Naive thymus-derived CD4-positive, alpha-beta T cell (primary cell): ENCODE measurements at regions of chr14 and their contacts with region 1.

Region 1: GRCh38 chr14:97978341-97978740 is 1181.2 kb downstream of the VRK1 start:
- DNase-seq: peak; percentile 33 to 83 (median 72)
- ATAC-seq: peak; percentile 84
- H3K4me3 ChIP-seq: peak overlapping the region; percentile 91
- H3K4me3 Mint-ChIP-seq: peak overlapping the region; percentile 85 to 99 (median 93)
- H3K27ac ChIP-seq: peak overlapping the region; percentile 85
- H3K27ac Mint-ChIP-seq: peak overlapping the region; percentile 68 to 99 (median 92)
- H3K4me1 ChIP-seq: peaks cover 25 to 40% of the 10 kb centered on the region in 2 donors
- H3K4me1 Mint-ChIP-seq: peaks cover 32 to 64% (median 50%) of the 10 kb centered on the region in 7 donors
- H3K27me3 ChIP-seq: no peaks in the 10 kb centered on the region
- H3K27me3 Mint-ChIP-seq: no peaks in the 10 kb centered on the region

Region 2: GRCh38 chr14:97177015-97177414 is 801.3 kb before region 1 on chr14:
- CTCF ChIA-PET with region 1: no interaction called
- POLR2A ChIA-PET with region 1: no interaction called
- intact Hi-C with region 1: loop called in 1 of 2 experiments (anchors 2 kb)
- DNase-seq: peak in 7 of 9 donors; percentile 36 to 63 (median 49)
- ATAC-seq: peak; percentile 67
- H3K4me3 ChIP-seq: no peak overlapping the region
- H3K4me3 Mint-ChIP-seq: peak overlapping the region in 4 of 10 donors; percentile 28 to 51 (median 36)
- H3K27ac ChIP-seq: no peak overlapping the region
- H3K27ac Mint-ChIP-seq: peak overlapping the region in 5 of 9 donors; percentile 32 to 78 (median 63)
- H3K4me1 ChIP-seq: peaks cover 0 to 3% of the 10 kb centered on the region in 2 donors
- H3K4me1 Mint-ChIP-seq: peaks cover 0 to 41% (median 32%) of the 10 kb centered on the region in 7 donors
- H3K27me3 ChIP-seq: no peaks in the 10 kb centered on the region
- H3K27me3 Mint-ChIP-seq: peaks cover 0 to 2% (median 0%) of the 10 kb centered on the region in 5 donors

Region 3: GRCh38 chr14:97620066-97620465 is 358.3 kb before region 1 on chr14:
- CTCF ChIA-PET with region 1: interaction called, 4 read pairs
- POLR2A ChIA-PET with region 1: interaction called, 3 read pairs
- intact Hi-C with region 1: loop called (anchors 5 kb)
- DNase-seq: peak in 1 of 9 donors; percentile 15
- ATAC-seq: no peak
- H3K4me3 ChIP-seq: peak overlapping the region; percentile 4
- H3K4me3 Mint-ChIP-seq: peak overlapping the region; percentile 72 to 95 (median 85)
- H3K27ac ChIP-seq: peak overlapping the region; percentile 76
- H3K27ac Mint-ChIP-seq: peak overlapping the region; percentile 95 to 100 (median 98)
- H3K4me1 ChIP-seq: peaks cover 37 to 38% of the 10 kb centered on the region in 2 donors
- H3K4me1 Mint-ChIP-seq: peaks cover 33 to 74% (median 58%) of the 10 kb centered on the region in 7 donors
- H3K27me3 ChIP-seq: no peaks in the 10 kb centered on the region
- H3K27me3 Mint-ChIP-seq: no peaks in the 10 kb centered on the region

Region 4: DNA sequence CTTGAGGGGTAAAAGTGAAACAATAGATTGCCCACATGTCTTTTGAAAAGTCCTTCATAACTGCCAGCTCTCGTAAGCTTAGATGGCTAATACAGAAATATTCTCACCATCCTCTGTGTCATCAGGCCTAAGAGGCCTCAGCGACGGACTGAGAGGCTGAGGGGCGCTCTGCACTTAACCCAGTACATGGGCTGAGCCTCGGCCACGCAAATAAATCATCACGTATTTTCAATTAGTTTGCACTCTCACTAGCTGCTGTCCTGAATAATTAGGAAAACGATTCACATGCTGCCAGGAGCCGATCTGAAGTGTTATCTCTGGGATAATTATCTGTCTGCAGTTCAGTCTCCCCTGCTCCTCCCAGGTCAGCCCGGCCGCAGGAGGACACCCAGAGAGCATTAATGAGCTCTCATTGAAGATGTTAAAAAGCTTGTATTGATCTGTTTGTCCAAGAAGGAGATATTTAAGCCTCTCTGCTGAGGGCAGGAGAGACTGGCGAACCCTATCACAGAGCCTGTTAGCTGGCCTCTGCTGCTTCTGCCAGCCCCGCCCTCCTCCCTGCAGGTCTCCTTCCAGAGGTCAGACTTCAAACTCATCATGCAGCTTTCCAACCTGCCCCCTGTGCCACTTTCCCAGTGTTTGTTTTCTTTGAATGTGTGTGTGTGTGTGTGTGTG is 129.9 kb before region 1 on chr14:
- CTCF ChIA-PET with region 1: no interaction called
- POLR2A ChIA-PET with region 1: no interaction called
- intact Hi-C with region 1: no loop called
- DNase-seq: no peak
- ATAC-seq: no peak
- H3K4me3 ChIP-seq: no peak overlapping the region
- H3K4me3 Mint-ChIP-seq: no peak overlapping the region
- H3K27ac ChIP-seq: no peak overlapping the region
- H3K27ac Mint-ChIP-seq: peak overlapping the region in 1 of 9 donors; percentile 21
- H3K4me1 ChIP-seq: no peaks in the 10 kb centered on the region
- H3K4me1 Mint-ChIP-seq: peaks cover 0 to 3% (median 0%) of the 10 kb centered on the region in 7 donors
- H3K27me3 ChIP-seq: no peaks in the 10 kb centered on the region
- H3K27me3 Mint-ChIP-seq: no peaks in the 10 kb centered on the region

Region 5: DNA sequence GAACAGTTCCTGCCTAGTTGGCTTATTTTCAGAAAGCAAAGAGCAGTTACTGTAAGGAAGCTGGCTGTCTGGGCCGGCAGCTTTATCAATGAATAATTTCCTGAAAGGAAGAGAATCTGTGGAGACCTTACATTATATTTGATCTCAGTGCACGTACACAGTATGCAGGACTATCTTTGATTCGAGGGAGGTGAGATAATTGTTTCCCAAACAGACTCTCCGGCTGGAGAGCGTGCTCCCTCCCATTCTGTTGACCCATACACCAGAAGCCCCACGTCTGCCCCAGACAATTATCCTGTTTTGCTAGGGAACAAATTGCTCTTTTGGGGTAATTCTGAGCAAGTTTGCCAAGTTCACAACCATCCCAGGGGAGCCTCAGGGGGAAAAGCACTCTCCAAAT is 66.1 kb before region 1 on chr14:
- CTCF ChIA-PET with region 1: no interaction called
- POLR2A ChIA-PET with region 1: no interaction called
- intact Hi-C with region 1: no loop called
- DNase-seq: no peak
- ATAC-seq: no peak
- H3K4me3 ChIP-seq: no peak overlapping the region
- H3K4me3 Mint-ChIP-seq: no peak overlapping the region
- H3K27ac ChIP-seq: no peak overlapping the region
- H3K27ac Mint-ChIP-seq: no peak overlapping the region
- H3K4me1 ChIP-seq: peaks cover 0 to 11% of the 10 kb centered on the region in 2 donors
- H3K4me1 Mint-ChIP-seq: peaks cover 5 to 18% (median 12%) of the 10 kb centered on the region in 7 donors
- H3K27me3 ChIP-seq: no peaks in the 10 kb centered on the region
- H3K27me3 Mint-ChIP-seq: peaks cover 0 to 16% (median 0%) of the 10 kb centered on the region in 5 donors

Region 6: GRCh38 chr14:97994020-97994531 is 15.7 kb after region 1 on chr14:
- CTCF ChIA-PET with region 1: interaction called, 12 read pairs
- POLR2A ChIA-PET with region 1: interaction called, 65 read pairs
- intact Hi-C with region 1: loop called in 1 of 2 experiments (anchors 1 kb)
- DNase-seq: peak in 8 of 9 donors; percentile 34 to 86 (median 78)
- ATAC-seq: peak; percentile 91
- H3K4me3 ChIP-seq: peak overlapping the region; percentile 33
- H3K4me3 Mint-ChIP-seq: peak overlapping the region; percentile 17 to 77 (median 65)
- H3K27ac ChIP-seq: peak overlapping the region; percentile 63
- H3K27ac Mint-ChIP-seq: peak overlapping the region; percentile 89 to 98 (median 93)
- H3K4me1 ChIP-seq: peaks cover 37 to 80% of the 10 kb centered on the region in 2 donors
- H3K4me1 Mint-ChIP-seq: peaks cover 37 to 89% (median 87%) of the 10 kb centered on the region in 7 donors
- H3K27me3 ChIP-seq: no peaks in the 10 kb centered on the region
- H3K27me3 Mint-ChIP-seq: no peaks in the 10 kb centered on the region

Region 7: GRCh38 chr14:98069712-98070171 is 91.4 kb after region 1 on chr14:
- CTCF ChIA-PET with region 1: no interaction called
- POLR2A ChIA-PET with region 1: no interaction called
- intact Hi-C with region 1: no loop called
- DNase-seq: no peak
- ATAC-seq: no peak
- H3K4me3 ChIP-seq: no peak overlapping the region
- H3K4me3 Mint-ChIP-seq: no peak overlapping the region
- H3K27ac ChIP-seq: no peak overlapping the region
- H3K27ac Mint-ChIP-seq: peak overlapping the region in 1 of 9 donors; percentile 6
- H3K4me1 ChIP-seq: no peaks in the 10 kb centered on the region
- H3K4me1 Mint-ChIP-seq: peaks cover 0 to 19% (median 8%) of the 10 kb centered on the region in 7 donors
- H3K27me3 ChIP-seq: no peaks in the 10 kb centered on the region
- H3K27me3 Mint-ChIP-seq: no peaks in the 10 kb centered on the region

Region 8: GRCh38 chr14:98167705-98168104 is 189.4 kb after region 1 on chr14:
- CTCF ChIA-PET with region 1: interaction called, 7 read pairs
- POLR2A ChIA-PET with region 1: interaction called, 18 read pairs
- intact Hi-C with region 1: no loop called
- DNase-seq: peak in 3 of 9 donors; percentile 34 to 45 (median 39)
- ATAC-seq: peak; percentile 27
- H3K4me3 ChIP-seq: peak overlapping the region; percentile 39
- H3K4me3 Mint-ChIP-seq: peak overlapping the region; percentile 49 to 84 (median 73)
- H3K27ac ChIP-seq: peak overlapping the region; percentile 81
- H3K27ac Mint-ChIP-seq: peak overlapping the region; percentile 83 to 100 (median 97)
- H3K4me1 ChIP-seq: peaks cover 55 to 88% of the 10 kb centered on the region in 2 donors
- H3K4me1 Mint-ChIP-seq: peaks cover 48 to 100% (median 96%) of the 10 kb centered on the region in 7 donors
- H3K27me3 ChIP-seq: no peaks in the 10 kb centered on the region
- H3K27me3 Mint-ChIP-seq: no peaks in the 10 kb centered on the region

Region 9: GRCh38 chr14:98219638-98220037 is 241.3 kb after region 1 on chr14:
- CTCF ChIA-PET with region 1: interaction called, 3 read pairs
- POLR2A ChIA-PET with region 1: interaction called, 15 read pairs
- intact Hi-C with region 1: loop called in 1 of 2 experiments (anchors 2 kb)
- DNase-seq: no peak
- ATAC-seq: no peak
- H3K4me3 ChIP-seq: no peak overlapping the region
- H3K4me3 Mint-ChIP-seq: peak overlapping the region in 4 of 10 donors; percentile 2 to 49 (median 33)
- H3K27ac ChIP-seq: no peak overlapping the region
- H3K27ac Mint-ChIP-seq: peak overlapping the region in 4 of 9 donors; percentile 60 to 83 (median 71)
- H3K4me1 ChIP-seq: peaks cover 32 to 76% of the 10 kb centered on the region in 2 donors
- H3K4me1 Mint-ChIP-seq: peaks cover 26 to 49% (median 29%) of the 10 kb centered on the region in 7 donors
- H3K27me3 ChIP-seq: no peaks in the 10 kb centered on the region
- H3K27me3 Mint-ChIP-seq: no peaks in the 10 kb centered on the region

Region 10: GRCh38 chr14:99415496-99416281 is 1437.3 kb after region 1 on chr14:
- CTCF ChIA-PET with region 1: no interaction called
- POLR2A ChIA-PET with region 1: no interaction called
- intact Hi-C with region 1: loop called in 1 of 2 experiments (anchors 5 kb)
- DNase-seq: peak in 8 of 9 donors; percentile 49 to 81 (median 75)
- ATAC-seq: peak; percentile 98
- H3K4me3 ChIP-seq: no peak overlapping the region
- H3K4me3 Mint-ChIP-seq: no peak overlapping the region
- H3K27ac ChIP-seq: no peak overlapping the region
- H3K27ac Mint-ChIP-seq: peak overlapping the region in 3 of 9 donors; percentile 56 to 73 (median 73)
- H3K4me1 ChIP-seq: peaks cover 0 to 4% of the 10 kb centered on the region in 2 donors
- H3K4me1 Mint-ChIP-seq: peaks cover 2 to 19% (median 6%) of the 10 kb centered on the region in 7 donors
- H3K27me3 ChIP-seq: no peaks in the 10 kb centered on the region
- H3K27me3 Mint-ChIP-seq: no peaks in the 10 kb centered on the region